Activated CD4-positive, alpha-beta T cell treated with anti-CD3 and anti-CD28 coated beads, Interleukin-2, amount 10 ng/mL, durations not matched to agents 24 days and 14 days (primary cell): ENCODE measurements at regions of chr13 and their contacts with region 1.

Region 1: DNA sequence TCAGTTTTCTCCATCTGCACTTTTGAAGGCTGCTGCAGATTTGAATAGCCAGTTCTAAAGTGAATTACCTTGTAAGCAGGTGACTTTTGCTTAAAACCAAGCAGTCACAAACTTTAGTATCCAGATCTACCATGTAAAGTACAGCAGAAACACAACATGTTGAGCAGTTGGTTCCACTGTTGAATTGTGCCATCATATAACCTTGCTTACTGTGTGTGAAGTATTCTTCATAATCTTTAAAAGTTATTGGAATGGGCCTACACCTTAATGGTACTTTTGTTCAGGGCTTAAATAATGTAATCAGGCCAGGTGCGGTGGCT is 23.2 kb upstream of the MTUS2 start:
- DNase-seq: no peak
- H3K4me3 Mint-ChIP-seq: no peak overlapping the region
- H3K27ac Mint-ChIP-seq: no peak overlapping the region
- H3K4me1 Mint-ChIP-seq: peaks cover 3% of the 10 kb centered on the region
- H3K27me3 Mint-ChIP-seq: peaks cover 21% of the 10 kb centered on the region

Region 2: DNA sequence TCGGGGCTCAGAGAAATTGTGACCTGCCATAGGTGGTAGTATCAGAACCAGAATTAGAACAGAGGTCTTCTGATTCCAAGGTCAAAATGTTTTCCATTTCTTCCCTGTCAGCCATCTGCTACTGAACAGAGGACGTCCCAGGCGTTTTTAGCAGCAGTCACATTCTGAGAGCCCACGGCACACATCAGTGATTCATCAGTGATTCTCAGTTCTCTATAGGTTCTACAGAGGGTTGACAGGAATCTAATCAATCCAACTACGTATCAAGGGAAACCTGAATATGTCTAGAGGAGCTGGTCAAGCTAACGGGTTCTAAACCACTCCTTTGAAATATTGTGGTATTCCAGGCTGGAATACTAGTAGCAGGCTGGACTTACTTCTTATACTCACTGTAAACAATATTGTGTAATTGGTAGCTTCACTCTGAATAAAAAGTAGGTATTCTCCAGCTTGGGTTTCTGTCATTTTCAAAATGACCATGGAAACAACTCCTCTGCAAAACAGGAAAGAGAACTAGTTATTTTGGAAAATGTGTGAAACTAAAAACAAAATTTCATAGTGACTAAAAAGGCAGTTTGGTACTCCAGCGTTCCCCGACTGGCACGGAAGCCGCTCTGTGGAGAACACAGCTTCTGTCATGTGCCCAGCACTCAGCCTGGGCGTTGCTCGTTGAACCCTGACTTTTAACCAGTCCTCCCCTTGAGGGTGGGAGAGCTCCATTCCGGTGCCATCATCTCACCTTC is 739.8 kb before region 1 on chr13:
- intact Hi-C with region 1: loop called (anchors 2 kb)
- DNase-seq: no peak
- H3K4me3 Mint-ChIP-seq: no peak overlapping the region
- H3K27ac Mint-ChIP-seq: no peak overlapping the region
- H3K4me1 Mint-ChIP-seq: no peaks in the 10 kb centered on the region
- H3K27me3 Mint-ChIP-seq: peaks cover 26% of the 10 kb centered on the region

Region 3: DNA sequence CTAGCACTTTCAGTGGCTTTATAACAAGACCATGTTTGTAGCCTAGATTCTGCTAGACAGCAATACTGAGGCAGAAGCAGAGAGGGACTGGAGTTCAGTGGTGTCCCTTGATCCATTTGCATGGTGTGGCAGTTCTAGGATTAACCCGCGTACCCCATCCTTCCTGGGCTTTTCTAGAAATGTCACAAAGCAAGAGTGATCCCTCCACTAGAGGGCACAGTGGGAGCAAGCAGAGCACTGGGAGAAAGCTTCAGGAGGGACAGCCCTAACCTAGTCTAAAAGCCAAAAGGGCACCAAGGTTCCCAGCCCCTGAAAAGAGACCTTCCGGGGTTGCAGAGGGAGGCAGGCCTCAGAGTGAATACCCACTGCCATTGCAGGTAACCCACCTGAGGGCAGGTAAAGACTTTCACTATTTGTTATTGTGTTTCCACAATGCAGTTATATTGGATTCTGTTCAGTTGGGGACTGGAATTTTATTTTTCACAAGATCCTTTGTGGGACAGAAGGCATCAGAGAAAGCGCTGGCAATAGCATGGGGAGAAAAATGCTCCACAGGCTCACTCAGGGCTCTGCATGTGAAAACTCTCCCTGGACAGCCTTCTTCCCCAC is 472.6 kb before region 1 on chr13:
- intact Hi-C with region 1: loop called (anchors 1 kb)
- DNase-seq: peak; percentile 89
- H3K4me3 Mint-ChIP-seq: no peak overlapping the region
- H3K27ac Mint-ChIP-seq: no peak overlapping the region
- H3K4me1 Mint-ChIP-seq: peaks cover 4% of the 10 kb centered on the region
- H3K27me3 Mint-ChIP-seq: no peaks in the 10 kb centered on the region

Region 4: DNA sequence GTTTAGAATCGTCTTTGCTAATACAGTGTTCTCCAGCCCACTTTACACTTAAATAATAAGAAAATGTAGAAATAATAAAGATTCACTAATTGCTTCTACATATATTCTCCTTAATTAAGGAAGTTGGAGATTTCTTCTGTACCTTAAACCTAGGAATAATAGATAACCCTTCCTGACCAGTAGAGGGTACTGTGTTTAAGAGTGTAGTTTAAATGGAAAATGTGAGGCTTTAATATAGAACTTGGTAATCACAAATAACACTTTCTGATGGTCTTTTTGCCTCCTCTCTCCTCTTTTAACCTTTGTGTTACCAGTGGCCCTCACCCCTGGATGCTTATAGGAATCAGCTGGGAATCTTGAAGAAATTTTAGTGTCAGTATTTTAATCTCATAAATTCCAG is 117.3 kb before region 1 on chr13:
- intact Hi-C with region 1: loop called (anchors 2 kb)
- DNase-seq: no peak
- H3K4me3 Mint-ChIP-seq: no peak overlapping the region
- H3K27ac Mint-ChIP-seq: no peak overlapping the region
- H3K4me1 Mint-ChIP-seq: peaks cover 4% of the 10 kb centered on the region
- H3K27me3 Mint-ChIP-seq: no peaks in the 10 kb centered on the region

Region 5: GRCh38 chr13:29154390-29154789 is 357.5 kb after region 1 on chr13:
- intact Hi-C with region 1: no loop called
- DNase-seq: no peak
- H3K4me3 Mint-ChIP-seq: no peak overlapping the region
- H3K27ac Mint-ChIP-seq: no peak overlapping the region
- H3K4me1 Mint-ChIP-seq: no peaks in the 10 kb centered on the region
- H3K27me3 Mint-ChIP-seq: no peaks in the 10 kb centered on the region